CD8-positive, alpha-beta memory T cell (primary cell): ENCODE measurements at regions of chr6 and their contacts with region 1.

Region 1: GRCh38 chr6:134123666-134124208 is 71.3 kb upstream of the SLC2A12 start:
- DNase-seq: peak in 3 of 5 donors; percentile 7 to 28 (median 18)
- H3K4me3 ChIP-seq: no peak overlapping the region
- H3K4me3 Mint-ChIP-seq: peak overlapping the region in 1 of 7 donors; percentile 54
- H3K27ac ChIP-seq: no peak overlapping the region
- H3K27ac Mint-ChIP-seq: peak overlapping the region in 2 of 8 donors; percentile 35 to 83
- H3K4me1 ChIP-seq: no peaks in the 10 kb centered on the region
- H3K4me1 Mint-ChIP-seq: peaks cover 0 to 4% (median 3%) of the 10 kb centered on the region in 3 donors
- H3K27me3 ChIP-seq: no peaks in the 10 kb centered on the region
- H3K27me3 Mint-ChIP-seq: peaks cover 1 to 11% of the 10 kb centered on the region in 2 donors

Region 2: GRCh38 chr6:133957780-133958242 is 165.9 kb before region 1 on chr6:
- CTCF ChIA-PET with region 1: no interaction called
- POLR2A ChIA-PET with region 1: no interaction called
- DNase-seq: no peak
- H3K4me3 ChIP-seq: no peak overlapping the region
- H3K4me3 Mint-ChIP-seq: peak overlapping the region in 2 of 7 donors; percentile 39 to 40
- H3K27ac ChIP-seq: peak overlapping the region; percentile 75
- H3K27ac Mint-ChIP-seq: peak overlapping the region in 6 of 8 donors; percentile 3 to 83 (median 52)
- H3K4me1 ChIP-seq: peaks cover 48% of the 10 kb centered on the region
- H3K4me1 Mint-ChIP-seq: peaks cover 72 to 89% (median 86%) of the 10 kb centered on the region in 3 donors
- H3K27me3 ChIP-seq: no peaks in the 10 kb centered on the region
- H3K27me3 Mint-ChIP-seq: no peaks in the 10 kb centered on the region

Region 3: DNA sequence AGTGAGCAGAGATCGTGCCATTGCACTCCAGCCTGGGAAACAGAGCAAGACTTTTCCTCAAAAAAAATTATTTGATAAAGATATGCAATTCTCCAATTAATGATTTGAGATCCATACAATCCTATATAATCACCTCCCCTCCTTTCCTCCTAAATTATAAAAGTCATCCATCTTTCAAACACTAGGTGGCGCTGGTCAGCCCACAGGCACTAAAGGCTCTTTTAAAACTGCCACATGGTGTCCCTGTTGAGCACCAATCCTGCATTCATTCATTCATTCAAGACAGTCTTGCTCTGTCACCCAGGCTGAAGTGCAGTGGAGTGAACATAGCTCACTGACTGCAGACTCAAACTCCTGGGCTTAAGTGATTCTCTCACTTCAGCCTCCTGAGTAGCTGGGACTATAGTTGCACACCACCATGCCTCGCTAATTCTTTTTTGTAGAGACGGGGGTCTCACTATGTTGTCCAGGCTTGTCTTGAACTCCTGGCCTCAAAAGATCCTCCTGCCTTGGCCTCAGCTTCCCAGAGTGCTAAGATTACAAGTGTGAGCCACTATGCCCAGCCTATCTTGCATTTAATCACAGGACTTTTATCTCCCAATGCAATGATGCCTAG is 12.6 kb before region 1 on chr6:
- CTCF ChIA-PET with region 1: interaction called, 32 read pairs
- POLR2A ChIA-PET with region 1: no interaction called
- DNase-seq: peak; percentile 12 to 58 (median 54)
- H3K4me3 ChIP-seq: no peak overlapping the region
- H3K4me3 Mint-ChIP-seq: no peak overlapping the region
- H3K27ac ChIP-seq: no peak overlapping the region
- H3K27ac Mint-ChIP-seq: no peak overlapping the region
- H3K4me1 ChIP-seq: no peaks in the 10 kb centered on the region
- H3K4me1 Mint-ChIP-seq: no peaks in the 10 kb centered on the region
- H3K27me3 ChIP-seq: no peaks in the 10 kb centered on the region
- H3K27me3 Mint-ChIP-seq: peaks cover 15 to 17% of the 10 kb centered on the region in 2 donors